ENCODE measurements at regions of chr16 and their contacts with region 1.

Region 1: GRCh38 chr16:85916141-85916890 is 17.4 kb downstream of the IRF8 start:
- DNase-seq: peak; percentile 44 to 66
- ATAC-seq: peak; percentile 40 to 91 (median 76)
- H3K4me3 ChIP-seq: no peak overlapping the region
- H3K27ac ChIP-seq: peak overlapping the region in 1 of 10 donors; percentile 60
- H3K4me1 ChIP-seq: peaks cover 0 to 54% (median 10%) of the 10 kb centered on the region in 9 donors
- H3K27me3 ChIP-seq: no peaks in the 10 kb centered on the region
- CTCF ChIP-seq: no peak

Region 2: DNA sequence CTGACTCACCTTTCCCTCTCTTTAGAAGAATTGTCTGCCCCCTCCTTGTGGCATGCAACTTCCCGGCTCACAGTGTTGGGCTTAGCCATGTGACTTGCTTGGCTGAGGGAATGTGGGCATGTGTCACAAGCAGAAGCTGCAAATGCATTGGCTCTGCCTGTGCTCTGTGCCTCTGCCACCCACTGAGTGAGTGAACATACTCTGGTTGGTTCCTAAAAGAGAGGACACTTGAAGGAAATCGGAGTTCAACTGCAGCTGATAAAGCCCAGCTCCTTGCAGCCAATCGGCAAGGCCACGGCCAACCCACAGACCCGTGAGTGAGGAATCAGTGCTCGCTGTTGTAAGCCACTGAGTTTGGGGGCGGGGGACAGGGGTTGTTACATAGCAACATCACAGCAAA is 216.7 kb before region 1 on chr16:
- intact Hi-C with region 1: no loop called
- DNase-seq: no peak
- ATAC-seq: peak; percentile 46 to 90 (median 82)
- H3K4me3 ChIP-seq: no peak overlapping the region
- H3K27ac ChIP-seq: no peak overlapping the region
- H3K4me1 ChIP-seq: peaks cover 0 to 4% (median 0%) of the 10 kb centered on the region in 9 donors
- H3K27me3 ChIP-seq: peaks cover 0 to 39% (median 29%) of the 10 kb centered on the region in 7 donors
- CTCF ChIP-seq: no peak

Region 3: GRCh38 chr16:85948616-85949265 is 32.4 kb after region 1 on chr16:
- intact Hi-C with region 1: no loop called
- DNase-seq: no peak
- ATAC-seq: no peak
- H3K4me3 ChIP-seq: no peak overlapping the region
- H3K27ac ChIP-seq: no peak overlapping the region
- H3K4me1 ChIP-seq: peaks cover 0 to 10% (median 0%) of the 10 kb centered on the region in 9 donors
- H3K27me3 ChIP-seq: peaks cover 0 to 71% (median 36%) of the 10 kb centered on the region in 7 donors
- CTCF ChIP-seq: no peak

Region 4: GRCh38 chr16:85963753-85964285 is 47.5 kb after region 1 on chr16:
- intact Hi-C with region 1: loop called in 1 of 10 experiments (anchors 1 kb)
- DNase-seq: peak; percentile 63 to 72
- ATAC-seq: peak; percentile 86 to 93 (median 89)
- H3K4me3 ChIP-seq: no peak overlapping the region
- H3K27ac ChIP-seq: peak overlapping the region in 4 of 10 donors; percentile 8 to 44 (median 30)
- H3K4me1 ChIP-seq: peaks cover 0 to 21% (median 7%) of the 10 kb centered on the region in 9 donors
- H3K27me3 ChIP-seq: peaks cover 0 to 16% (median 4%) of the 10 kb centered on the region in 7 donors
- CTCF ChIP-seq: no peak

Region 5: DNA sequence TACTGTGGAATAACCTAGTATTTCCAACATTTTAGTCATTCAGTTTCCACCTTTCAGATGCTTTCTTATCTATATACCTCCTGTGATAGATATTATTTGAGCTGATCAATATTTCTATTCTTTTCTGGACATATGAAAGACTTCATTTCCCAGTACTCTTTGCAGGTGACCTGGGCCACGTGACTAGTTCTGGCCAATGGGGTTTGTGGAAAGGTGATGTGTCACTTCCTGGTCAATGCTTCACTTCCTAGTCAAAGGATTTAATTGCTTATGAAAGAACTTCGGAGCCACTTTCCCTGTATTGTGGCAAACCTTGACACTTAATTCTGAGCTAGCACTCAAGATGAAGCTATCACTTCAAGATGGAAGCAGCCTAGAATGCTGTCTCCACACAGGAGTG is 345.1 kb after region 1 on chr16:
- intact Hi-C with region 1: no loop called
- DNase-seq: no peak
- ATAC-seq: no peak
- H3K4me3 ChIP-seq: no peak overlapping the region
- H3K27ac ChIP-seq: no peak overlapping the region
- H3K4me1 ChIP-seq: no peaks in the 10 kb centered on the region
- H3K27me3 ChIP-seq: peaks cover 0 to 38% (median 0%) of the 10 kb centered on the region in 7 donors
- CTCF ChIP-seq: no peak

Region 6: DNA sequence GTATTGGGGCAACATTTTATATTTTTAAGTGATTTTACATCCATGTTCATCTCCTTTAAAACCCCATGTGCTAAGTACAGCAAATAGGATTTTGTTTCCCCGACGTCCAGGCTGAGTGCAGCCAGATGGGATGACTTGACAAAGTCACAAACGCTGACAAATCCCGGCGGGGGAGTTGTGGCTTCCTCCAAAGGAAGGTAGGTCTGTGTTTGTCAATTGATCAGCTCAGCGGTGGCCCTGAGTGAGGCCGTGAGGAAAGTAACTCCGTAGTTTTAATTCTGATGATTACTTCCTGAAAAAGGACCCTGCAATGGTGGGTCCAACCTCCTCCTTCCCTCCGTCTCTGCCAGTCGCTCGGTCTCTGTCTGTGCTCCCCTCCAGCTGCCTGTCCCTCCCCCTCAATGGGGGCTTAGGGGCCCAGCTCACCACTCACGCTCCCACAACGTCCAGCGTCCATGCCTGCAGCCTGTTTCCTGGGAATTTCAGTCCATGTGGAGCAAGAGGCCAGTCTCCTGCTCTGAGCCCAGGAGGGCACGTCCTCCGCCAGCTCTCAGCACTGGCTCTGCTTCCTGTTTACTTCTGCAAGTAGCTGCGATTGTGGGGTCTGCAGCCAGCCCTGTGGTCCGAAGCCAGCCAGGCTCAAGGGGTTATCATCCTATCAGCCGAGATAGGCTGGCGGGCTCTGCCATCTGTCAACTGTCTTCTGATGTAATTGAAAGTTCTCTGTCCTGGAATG is 384.6 kb after region 1 on chr16:
- intact Hi-C with region 1: no loop called
- DNase-seq: no peak
- ATAC-seq: no peak
- H3K4me3 ChIP-seq: no peak overlapping the region
- H3K27ac ChIP-seq: no peak overlapping the region
- H3K4me1 ChIP-seq: peaks cover 0 to 13% (median 0%) of the 10 kb centered on the region in 9 donors
- H3K27me3 ChIP-seq: peaks cover 23 to 95% (median 91%) of the 10 kb centered on the region in 7 donors
- CTCF ChIP-seq: no peak

Measured in heart right ventricle (tissue), 16 donors.